ENCODE measurements at regions of chr18 and their contacts with region 1.

Region 1: DNA sequence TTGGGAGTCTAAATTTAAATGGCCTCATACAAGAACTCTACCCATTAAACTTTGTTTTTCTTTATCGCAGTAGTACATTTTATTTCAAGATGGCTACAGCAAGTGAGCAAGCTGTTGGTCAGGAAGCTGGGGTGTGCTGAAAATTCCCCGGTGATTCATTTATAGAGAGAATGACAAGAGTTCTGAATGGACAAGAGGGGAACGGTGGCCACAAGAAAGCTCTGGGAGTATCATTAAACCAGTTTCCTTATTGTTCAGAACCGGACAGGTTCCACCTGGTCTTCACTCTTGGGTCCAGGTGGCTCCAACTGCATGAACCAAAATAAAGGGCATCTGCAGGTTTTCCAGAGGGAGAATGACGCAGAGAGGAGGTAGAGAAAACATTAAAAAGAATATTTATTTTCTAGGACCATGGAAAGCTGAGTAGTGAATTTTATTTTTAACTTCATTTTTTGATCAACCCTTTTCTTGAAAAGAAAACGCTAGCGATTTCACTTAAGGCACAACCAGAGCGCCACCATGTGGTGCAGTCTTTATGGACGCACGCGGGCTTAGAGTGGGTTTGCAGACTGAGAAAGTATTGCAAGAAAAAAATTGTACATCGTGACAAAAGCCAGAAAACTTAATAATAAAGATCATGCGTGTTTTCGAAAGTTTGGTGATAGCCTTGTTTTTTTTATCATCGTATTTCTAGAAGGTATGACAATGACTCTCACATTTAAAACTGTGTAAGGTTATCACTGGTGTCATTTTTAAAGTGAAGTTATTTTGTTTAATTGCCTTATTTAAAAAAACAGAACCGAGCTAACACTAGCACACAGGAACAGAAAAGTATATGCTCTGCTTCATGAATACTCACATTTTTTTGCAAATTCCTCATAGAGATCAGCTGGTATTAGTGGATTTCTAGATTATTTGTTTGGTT is 97.9 kb upstream of the NOL4 start:
- DNase-seq: peak; percentile 40
- H3K4me3 ChIP-seq: no peak overlapping the region
- H3K27ac ChIP-seq: no peak overlapping the region
- H3K4me1 ChIP-seq: no peaks in the 10 kb centered on the region
- H3K27me3 ChIP-seq: no peaks in the 10 kb centered on the region
- CTCF ChIP-seq: peak; percentile 20 to 56 (median 48)
- POLR2A ChIP-seq: no peak

Region 2: DNA sequence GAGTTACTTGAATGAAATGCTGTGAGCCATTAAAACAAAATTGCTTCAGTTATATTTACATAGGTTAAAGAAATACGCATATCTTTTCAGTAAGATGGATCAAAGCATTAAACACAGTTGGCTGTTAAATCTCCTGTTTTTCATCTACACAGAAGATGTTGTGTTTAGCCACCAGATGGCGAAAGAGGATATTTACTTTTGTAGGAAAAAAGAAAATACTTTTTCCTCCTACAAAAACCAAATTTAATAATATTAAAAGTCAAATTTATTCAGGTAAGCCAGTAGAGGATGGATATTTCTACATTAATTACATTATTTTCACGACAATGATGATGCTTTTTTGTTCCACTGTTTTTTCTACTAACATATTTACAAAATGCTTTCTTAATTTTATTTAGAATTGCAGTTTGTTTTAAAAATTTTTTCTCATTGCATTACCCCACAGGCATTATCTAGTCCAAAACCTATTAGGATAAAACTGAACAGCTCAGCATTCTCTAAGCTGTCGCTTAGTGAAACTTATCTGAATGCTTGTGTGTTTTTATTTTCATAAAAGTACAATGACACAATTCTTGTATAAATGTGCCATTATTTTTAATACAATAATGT is 570.9 kb before region 1 on chr18:
- intact Hi-C with region 1: loop called (anchors 10 kb)
- DNase-seq: no peak
- H3K4me3 ChIP-seq: no peak overlapping the region
- H3K27ac ChIP-seq: no peak overlapping the region
- H3K4me1 ChIP-seq: no peaks in the 10 kb centered on the region
- H3K27me3 ChIP-seq: no peaks in the 10 kb centered on the region
- CTCF ChIP-seq: peak in 3 of 4 experiments; percentile 50 to 64 (median 60)
- POLR2A ChIP-seq: no peak

Region 3: DNA sequence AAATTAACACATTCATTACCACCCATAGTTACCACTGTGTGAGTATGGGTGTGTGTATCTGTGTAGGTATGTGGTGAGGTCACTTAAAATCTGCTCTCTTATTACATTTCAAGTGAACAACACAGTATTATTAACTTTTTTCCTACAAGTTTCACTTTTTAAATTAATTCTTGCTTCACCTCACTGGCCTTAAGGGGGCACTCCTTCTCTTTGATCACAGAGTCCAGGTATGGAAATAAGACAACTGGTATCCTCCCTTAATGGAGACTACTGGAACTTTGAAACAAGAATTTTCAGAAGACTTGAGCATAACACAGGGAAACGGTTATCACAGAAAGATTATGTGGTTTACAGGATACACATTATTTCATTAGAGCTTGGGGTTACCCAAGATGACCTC is 488.8 kb before region 1 on chr18:
- intact Hi-C with region 1: loop called (anchors 5 kb)
- DNase-seq: no peak
- H3K4me3 ChIP-seq: no peak overlapping the region
- H3K27ac ChIP-seq: no peak overlapping the region
- H3K4me1 ChIP-seq: no peaks in the 10 kb centered on the region
- H3K27me3 ChIP-seq: no peaks in the 10 kb centered on the region
- CTCF ChIP-seq: no peak
- POLR2A ChIP-seq: no peak

Region 4: DNA sequence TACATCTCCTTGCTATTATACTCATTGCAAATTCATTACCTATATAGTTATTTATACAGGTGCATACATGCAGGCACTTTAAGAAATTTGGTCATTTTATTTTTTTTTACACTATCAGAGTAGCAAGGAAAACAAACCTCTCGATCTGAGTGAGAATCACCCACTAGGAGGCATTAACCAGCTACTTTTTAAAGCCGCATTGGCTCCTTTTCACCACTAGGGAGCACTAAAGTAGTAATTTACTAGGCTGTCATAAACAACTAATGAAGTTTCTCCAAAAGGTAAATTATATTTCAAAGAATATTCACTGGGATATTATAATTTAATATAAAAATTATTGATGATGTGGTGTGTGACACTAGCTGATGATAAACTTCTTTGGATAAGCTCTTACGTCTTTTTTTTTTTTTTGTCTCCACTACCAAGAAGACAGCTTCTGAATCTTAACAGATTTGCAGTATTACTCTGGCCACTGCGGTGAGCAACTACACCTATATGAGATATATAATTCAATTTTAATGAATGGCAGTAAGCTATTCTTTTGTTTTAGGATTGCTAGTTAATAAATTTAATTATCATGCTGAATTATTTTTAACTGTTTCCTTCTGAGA is 199.8 kb before region 1 on chr18:
- intact Hi-C with region 1: loop called (anchors 5 kb)
- DNase-seq: peak; percentile 11
- H3K4me3 ChIP-seq: no peak overlapping the region
- H3K27ac ChIP-seq: no peak overlapping the region
- H3K4me1 ChIP-seq: no peaks in the 10 kb centered on the region
- H3K27me3 ChIP-seq: no peaks in the 10 kb centered on the region
- CTCF ChIP-seq: peak; percentile 20 to 74 (median 68)
- POLR2A ChIP-seq: no peak

Measured in prostate gland (tissue), 2 donors.